PC-3 (cell line): ENCODE measurements at regions of chr2 and their contacts with region 1.

Region 1: DNA sequence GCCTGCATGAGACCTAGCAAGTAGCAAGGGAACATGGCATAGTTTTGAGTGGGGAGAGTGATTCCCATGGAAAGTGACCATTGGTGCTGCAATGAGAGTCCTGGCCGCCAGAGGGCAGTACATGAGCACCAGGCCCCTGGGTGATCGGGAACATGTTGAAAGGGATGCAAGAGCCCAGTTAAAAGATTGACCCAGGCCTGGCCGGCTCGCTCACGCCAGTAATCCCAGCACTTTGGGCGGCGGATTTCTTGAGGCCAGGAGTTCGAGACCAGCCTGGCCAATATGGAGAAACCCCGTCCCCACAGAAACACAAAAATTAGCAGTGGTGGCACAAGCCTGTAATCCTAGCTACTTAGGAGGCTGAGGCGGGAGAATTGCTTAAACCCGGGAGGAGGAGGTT is 22.2 kb downstream of the FAP start:
- DNase-seq: peak; percentile 84
- ATAC-seq: peak; percentile 92
- H3K4me3 ChIP-seq: no peak overlapping the region
- H3K27ac ChIP-seq: no peak overlapping the region
- H3K4me1 ChIP-seq: no peaks in the 10 kb centered on the region
- H3K27me3 ChIP-seq: no peaks in the 10 kb centered on the region
- CTCF ChIP-seq: peak; percentile 94

Region 2: DNA sequence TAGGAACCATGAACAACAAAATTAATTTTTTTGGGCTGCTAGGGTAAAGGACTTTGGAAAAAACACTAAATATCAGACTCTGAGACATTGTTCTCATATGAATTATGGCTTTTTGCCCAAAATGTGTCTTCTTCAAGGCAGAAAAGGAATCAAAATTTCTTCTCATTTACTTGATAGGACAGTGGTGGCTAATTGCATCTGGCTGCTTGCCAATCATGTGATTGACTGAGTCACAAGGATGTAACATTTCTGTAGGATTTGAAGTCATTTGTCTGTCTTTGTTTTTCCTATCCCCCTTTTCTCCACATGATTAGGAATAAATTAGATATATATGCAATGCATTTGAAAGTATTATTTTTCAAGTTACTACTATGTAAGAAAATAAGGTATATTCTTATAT is 466.7 kb before region 1 on chr2:
- CTCF ChIA-PET with region 1: no interaction called
- POLR2A ChIA-PET with region 1: no interaction called
- intact Hi-C with region 1: no loop called
- DNase-seq: no peak
- ATAC-seq: no peak
- H3K4me3 ChIP-seq: no peak overlapping the region
- H3K27ac ChIP-seq: no peak overlapping the region
- H3K4me1 ChIP-seq: no peaks in the 10 kb centered on the region
- H3K27me3 ChIP-seq: no peaks in the 10 kb centered on the region
- CTCF ChIP-seq: no peak

Region 3: DNA sequence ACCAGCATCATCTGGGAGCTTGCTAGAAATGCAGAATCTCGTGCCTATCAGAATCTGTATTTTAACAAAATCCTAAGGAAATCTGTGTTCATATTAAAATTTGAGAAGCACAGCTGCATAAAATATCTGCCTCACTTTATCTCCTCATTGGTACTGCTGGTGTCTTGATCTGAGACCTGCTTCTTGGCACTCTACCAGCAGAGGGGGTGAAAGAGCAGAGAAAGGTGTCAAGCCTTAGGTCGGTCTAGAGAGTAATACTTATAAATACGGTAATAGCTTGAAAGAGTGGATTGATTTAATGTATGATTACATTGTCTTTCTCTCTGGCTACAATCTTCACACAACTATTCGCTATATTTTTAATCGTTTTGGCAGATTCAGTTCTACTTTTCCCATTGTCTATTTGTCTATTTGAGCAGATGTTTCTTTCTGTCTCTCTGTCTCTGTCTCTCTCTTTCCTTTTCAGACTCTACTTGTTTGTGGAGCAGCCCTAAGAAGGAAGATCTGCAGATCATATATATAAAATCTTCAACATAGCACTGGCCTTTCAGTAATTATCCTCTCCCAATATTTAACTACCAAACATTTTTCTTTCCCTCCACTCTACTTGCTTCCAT is 67.3 kb before region 1 on chr2:
- CTCF ChIA-PET with region 1: interaction called, 13 read pairs
- POLR2A ChIA-PET with region 1: no interaction called
- intact Hi-C with region 1: loop called (anchors 1 kb)
- DNase-seq: peak; percentile 81
- ATAC-seq: peak; percentile 93
- H3K4me3 ChIP-seq: no peak overlapping the region
- H3K27ac ChIP-seq: no peak overlapping the region
- H3K4me1 ChIP-seq: no peaks in the 10 kb centered on the region
- H3K27me3 ChIP-seq: no peaks in the 10 kb centered on the region
- CTCF ChIP-seq: peak; percentile 87

Region 4: DNA sequence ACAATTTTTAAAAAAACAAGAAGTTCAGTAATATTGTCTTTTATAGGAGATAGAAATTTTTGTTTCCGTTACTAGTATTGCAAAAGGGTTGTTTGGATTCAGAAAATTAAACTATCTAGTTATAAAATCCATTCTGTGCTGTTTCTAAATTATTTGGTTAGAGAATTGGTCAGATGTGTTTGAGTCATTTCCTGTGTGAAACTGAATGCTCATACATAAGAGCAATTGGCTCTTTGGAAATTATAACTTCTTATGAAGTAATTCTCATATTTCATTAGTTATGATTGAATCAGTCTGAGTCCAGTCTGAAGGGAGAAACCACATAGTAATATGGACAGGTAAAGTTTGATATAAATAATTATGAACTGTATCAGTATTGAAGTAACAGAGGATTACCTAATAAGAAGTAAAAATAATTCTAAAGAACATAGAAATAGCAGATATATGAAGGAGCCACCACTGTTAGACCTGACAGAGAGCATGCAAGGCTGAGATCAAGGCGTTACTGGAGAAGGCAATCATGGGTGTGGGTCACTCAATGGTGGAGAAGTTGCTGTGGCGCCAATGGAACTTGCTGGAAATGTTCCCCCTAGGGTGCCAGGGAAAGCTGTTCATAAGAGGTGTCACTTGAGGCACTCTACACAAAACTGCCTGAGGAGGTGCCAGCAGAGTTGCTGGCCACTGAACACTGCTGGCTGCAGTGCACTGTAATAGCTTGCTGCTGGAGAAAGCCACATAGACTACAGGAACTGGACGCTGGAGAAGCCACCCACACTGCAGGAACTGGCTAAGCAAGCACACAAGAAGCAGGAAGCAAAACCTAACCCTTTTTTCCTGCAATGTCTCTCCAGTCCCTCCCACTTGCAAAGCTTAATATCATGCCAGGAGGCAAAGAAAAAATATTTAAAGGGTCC is 40.2 kb after region 1 on chr2:
- CTCF ChIA-PET with region 1: no interaction called
- POLR2A ChIA-PET with region 1: no interaction called
- intact Hi-C with region 1: loop called (anchors 5 kb)
- DNase-seq: peak; percentile 63
- ATAC-seq: peak; percentile 84
- H3K4me3 ChIP-seq: 0 out of 2 replicates have a peak overlapping the region, but pooled peaks have one; percentile 6
- H3K27ac ChIP-seq: peak overlapping the region; percentile 68
- H3K4me1 ChIP-seq: peaks cover 27% of the 10 kb centered on the region
- H3K27me3 ChIP-seq: no peaks in the 10 kb centered on the region
- CTCF ChIP-seq: no peak